Gastrocnemius medialis (tissue), 4 donors: ENCODE measurements at regions of chr19 and their contacts with region 1.

Region 1: DNA sequence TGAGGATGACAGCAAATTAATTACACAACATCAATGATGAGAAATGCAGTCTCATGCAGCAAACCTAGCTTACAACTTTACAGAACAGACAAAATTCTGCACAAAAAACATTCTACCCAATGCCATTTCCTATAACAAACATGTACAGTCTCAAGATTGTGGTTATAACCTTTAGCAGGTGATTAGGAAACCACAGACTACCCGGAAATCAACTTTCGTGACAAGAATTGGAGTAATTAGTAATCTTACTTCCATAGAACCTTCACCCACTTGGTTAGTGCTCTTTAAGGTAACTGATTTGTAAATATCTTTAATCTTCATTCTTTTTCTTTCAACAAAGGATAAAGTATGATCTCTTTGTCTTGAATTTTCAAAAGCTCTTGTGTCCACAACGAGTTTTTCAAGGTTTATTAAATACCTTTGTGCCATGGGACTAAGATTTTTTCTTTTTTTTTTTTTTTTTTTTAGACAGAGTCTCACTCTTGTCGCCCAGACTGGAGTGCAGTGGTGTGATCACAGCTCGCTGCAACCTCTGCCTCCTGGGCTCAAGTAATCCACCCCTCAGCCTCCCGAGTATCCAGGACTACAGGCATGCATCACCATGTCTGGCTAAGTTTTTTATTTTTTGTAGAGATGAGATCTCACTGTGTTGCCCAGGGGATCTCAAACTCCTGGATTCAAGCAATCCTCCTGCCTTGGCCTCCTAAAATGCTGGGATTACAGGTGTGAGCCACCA is 78.8 kb downstream of the MAP4K1 start:
- DNase-seq: no peak
- ATAC-seq: no peak
- H3K4me3 ChIP-seq: no peak overlapping the region
- H3K27ac ChIP-seq: peak overlapping the region in 2 of 4 donors; percentile 63 to 64
- H3K4me1 ChIP-seq: peaks cover 0 to under 1% of the 10 kb centered on the region in 2 donors
- H3K27me3 ChIP-seq: no peaks in the 10 kb centered on the region
- CTCF ChIP-seq: no peak
- POLR2A ChIP-seq: no peak

Region 2: DNA sequence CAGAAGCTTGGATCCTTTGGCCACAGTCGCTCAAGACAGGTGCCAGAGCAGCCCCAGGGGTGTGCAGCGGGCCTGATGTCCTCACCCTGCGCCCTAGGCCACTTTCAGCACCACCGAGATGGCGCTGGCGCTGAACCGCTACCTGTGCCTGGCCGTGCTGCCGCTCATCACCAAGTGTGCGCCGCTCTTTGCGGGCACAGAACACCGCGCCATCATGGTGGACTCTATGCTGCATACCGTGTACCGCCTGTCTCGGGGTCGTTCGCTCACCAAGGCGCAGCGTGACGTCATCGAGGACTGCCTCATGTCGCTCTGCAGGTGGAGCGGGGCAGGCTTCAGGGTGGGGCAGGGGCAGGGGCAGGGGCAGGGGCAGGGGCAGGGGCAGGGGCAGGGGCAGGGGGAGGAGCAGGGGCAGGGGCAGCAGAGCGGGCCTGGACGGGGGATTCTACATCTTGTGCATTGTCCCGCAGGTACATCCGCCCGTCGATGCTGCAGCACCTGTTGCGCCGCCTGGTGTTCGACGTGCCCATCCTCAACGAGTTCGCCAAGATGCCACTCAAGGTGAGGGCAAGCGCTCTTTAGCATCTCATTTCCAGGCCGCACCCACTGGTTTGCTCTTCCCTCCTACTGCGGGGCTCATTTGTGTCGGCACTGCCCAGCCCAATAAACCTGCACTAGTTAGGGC is 36.4 kb before region 1 on chr19:
- in situ Hi-C with region 1: no loop called
- intact Hi-C with region 1: loop called (anchors 5 kb)
- DNase-seq: no peak
- ATAC-seq: no peak
- H3K4me3 ChIP-seq: no peak overlapping the region
- H3K27ac ChIP-seq: no peak overlapping the region
- H3K4me1 ChIP-seq: no peaks in the 10 kb centered on the region
- H3K27me3 ChIP-seq: no peaks in the 10 kb centered on the region
- CTCF ChIP-seq: no peak
- POLR2A ChIP-seq: no peak

Region 3: GRCh38 chr19:38729653-38730469 is 190.9 kb after region 1 on chr19:
- in situ Hi-C with region 1: no loop called
- intact Hi-C with region 1: no loop called
- DNase-seq: peak in 1 of 2 donors; percentile 58
- ATAC-seq: peak in 1 of 2 donors; percentile 45
- H3K4me3 ChIP-seq: no peak overlapping the region
- H3K27ac ChIP-seq: peak overlapping the region; percentile 25 to 54 (median 40)
- H3K4me1 ChIP-seq: peaks cover 7 to 8% of the 10 kb centered on the region in 2 donors
- H3K27me3 ChIP-seq: no peaks in the 10 kb centered on the region
- CTCF ChIP-seq: peak; percentile 71 to 89 (median 76)
- POLR2A ChIP-seq: no peak

Region 4: GRCh38 chr19:39381910-39382611 is 843.1 kb after region 1 on chr19:
- in situ Hi-C with region 1: no loop called
- intact Hi-C with region 1: loop called (anchors 10 kb)
- DNase-seq: no peak
- ATAC-seq: no peak
- H3K4me3 ChIP-seq: no peak overlapping the region
- H3K27ac ChIP-seq: no peak overlapping the region
- H3K4me1 ChIP-seq: no peaks in the 10 kb centered on the region
- H3K27me3 ChIP-seq: no peaks in the 10 kb centered on the region
- CTCF ChIP-seq: no peak
- POLR2A ChIP-seq: no peak